IMR-90 (cell line): ENCODE measurements at regions of chr4 and their contacts with region 1.

Region 1: GRCh38 chr4:101356928-101357327 is 9.6 kb upstream of the PPP3CA start:
- DNase-seq: peak; percentile 95
- ATAC-seq: peak; percentile 81
- H3K4me3 ChIP-seq: no peak overlapping the region
- H3K27ac ChIP-seq: peak overlapping the region; percentile 19; the same call in 1 of the 2 replicates
- H3K4me1 ChIP-seq: peaks cover 7% of the 10 kb centered on the region
- H3K27me3 ChIP-seq: no peaks in the 10 kb centered on the region
- CTCF ChIP-seq: no peak
- POLR2A ChIP-seq: no peak
- RAD21 ChIP-seq: no peak

Region 2: DNA sequence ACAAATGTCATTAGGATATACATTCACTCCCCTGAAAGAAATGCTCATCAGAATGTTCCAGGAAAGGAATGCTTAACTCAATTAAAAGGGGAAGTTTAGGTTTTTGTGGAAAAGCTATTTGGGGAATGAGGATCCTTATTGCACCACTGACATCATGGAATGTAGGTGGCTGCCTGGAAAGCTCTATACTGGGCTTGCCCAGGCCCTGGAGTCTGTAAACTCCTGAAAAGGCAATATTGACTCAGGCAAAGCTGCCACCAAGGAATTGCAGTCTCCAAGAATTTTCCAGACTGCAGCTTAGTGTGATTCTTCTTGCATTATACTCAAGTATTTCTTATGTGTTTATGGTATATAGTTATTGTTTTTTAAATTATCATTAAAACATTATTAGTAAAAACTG is 1524.6 kb before region 1 on chr4:
- CTCF ChIA-PET with region 1: no interaction called
- POLR2A ChIA-PET with region 1: no interaction called
- dilution Hi-C with region 1: no loop called
- in situ Hi-C with region 1: no loop called
- intact Hi-C with region 1: no loop called
- DNase-seq: no peak
- ATAC-seq: peak; percentile 68
- H3K4me3 ChIP-seq: no peak overlapping the region
- H3K27ac ChIP-seq: no peak overlapping the region
- H3K4me1 ChIP-seq: no peaks in the 10 kb centered on the region
- H3K27me3 ChIP-seq: 0 out of 2 replicates have a peak, but pooled peaks cover 2% of the 10 kb centered on the region
- CTCF ChIP-seq: no peak
- POLR2A ChIP-seq: no peak
- RAD21 ChIP-seq: no peak

Region 3: DNA sequence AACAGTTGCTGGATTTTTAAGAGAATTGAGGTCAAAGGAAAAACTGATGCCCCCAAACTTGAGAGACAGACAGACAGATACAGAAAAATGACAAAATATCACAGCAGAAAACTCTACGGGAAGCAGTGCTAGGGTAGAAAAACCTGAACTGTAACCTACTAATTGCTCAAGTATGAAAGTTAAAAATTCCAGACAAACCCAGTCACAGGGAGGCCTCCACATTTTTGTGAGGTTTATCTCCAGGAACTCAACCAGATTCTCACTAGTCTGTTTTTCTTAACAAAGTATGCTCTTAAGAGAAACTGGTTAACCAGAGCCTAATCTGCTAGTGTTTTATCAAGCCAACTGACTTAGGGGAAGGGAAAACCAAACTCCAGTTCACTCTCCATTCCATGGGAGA is 10.3 kb after region 1 on chr4:
- CTCF ChIA-PET with region 1: no interaction called
- POLR2A ChIA-PET with region 1: interaction called, 3 read pairs
- dilution Hi-C with region 1: no loop called
- in situ Hi-C with region 1: no loop called
- intact Hi-C with region 1: loop called (anchors 1 kb)
- DNase-seq: peak; percentile 93
- ATAC-seq: peak; percentile 95
- H3K4me3 ChIP-seq: no peak overlapping the region
- H3K27ac ChIP-seq: peak overlapping the region; percentile 86
- H3K4me1 ChIP-seq: peaks cover 7% of the 10 kb centered on the region
- H3K27me3 ChIP-seq: no peaks in the 10 kb centered on the region
- CTCF ChIP-seq: no peak
- POLR2A ChIP-seq: no peak
- RAD21 ChIP-seq: no peak